Activated naive CD4-positive, alpha-beta T cell treated with anti-CD3 and anti-CD28 coated beads, Interleukin-2, amount 10 ng/mL, durations not matched to agents 7 days and 5 days (primary cell): ENCODE measurements at regions of chr4 and their contacts with region 1.

Region 1: GRCh38 chr4:108570993-108571569 is 49.3 kb upstream of the RPL34 start:
- DNase-seq: no peak
- H3K4me3 Mint-ChIP-seq: no peak overlapping the region
- H3K27ac Mint-ChIP-seq: no peak overlapping the region
- H3K4me1 Mint-ChIP-seq: peaks cover 23% of the 10 kb centered on the region
- H3K27me3 Mint-ChIP-seq: peaks cover 4% of the 10 kb centered on the region

Region 2: GRCh38 chr4:108018040-108018883 is 552.8 kb before region 1 on chr4:
- CTCF ChIA-PET with region 1: interaction called, 47 read pairs
- DNase-seq: peak; percentile 91
- H3K4me3 Mint-ChIP-seq: no peak overlapping the region
- H3K27ac Mint-ChIP-seq: peak overlapping the region; percentile 66
- H3K4me1 Mint-ChIP-seq: peaks cover 23% of the 10 kb centered on the region
- H3K27me3 Mint-ChIP-seq: no peaks in the 10 kb centered on the region

Region 3: GRCh38 chr4:108036213-108036612 is 534.9 kb before region 1 on chr4:
- CTCF ChIA-PET with region 1: interaction called, 55 read pairs
- DNase-seq: peak; percentile 88
- H3K4me3 Mint-ChIP-seq: peak overlapping the region; percentile 57
- H3K27ac Mint-ChIP-seq: peak overlapping the region; percentile 98
- H3K4me1 Mint-ChIP-seq: peaks cover 64% of the 10 kb centered on the region
- H3K27me3 Mint-ChIP-seq: no peaks in the 10 kb centered on the region

Region 4: DNA sequence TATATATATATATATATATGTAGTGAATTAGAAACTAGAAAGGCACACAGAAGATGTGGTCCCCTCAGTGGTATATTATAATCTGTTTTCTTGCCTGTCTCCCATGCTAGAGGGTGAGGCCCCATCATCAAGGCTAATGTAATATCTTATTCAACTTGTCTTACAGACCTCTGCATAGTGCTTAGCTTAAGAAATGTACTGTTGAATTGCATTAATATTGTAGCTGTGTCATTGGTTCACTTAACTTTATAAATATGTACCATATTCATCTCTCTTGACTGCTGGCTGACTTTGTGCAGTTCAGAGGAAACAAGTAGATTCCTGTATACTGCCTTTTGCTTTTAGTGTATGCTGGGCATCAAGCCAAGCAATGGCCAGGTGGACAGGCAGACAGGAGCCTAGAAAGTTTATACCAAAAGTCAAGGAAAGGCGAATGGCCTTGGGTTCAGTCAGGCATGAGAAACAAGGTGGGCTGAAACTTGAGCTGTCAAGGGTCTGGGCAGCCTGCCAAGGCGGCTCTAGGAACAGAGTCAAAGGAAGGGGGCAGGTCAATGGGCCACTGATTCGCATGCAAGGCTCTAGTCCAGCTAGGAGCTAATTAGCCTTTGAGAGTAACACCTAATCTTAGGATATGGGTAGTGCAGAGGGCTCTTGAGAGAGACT is 323.6 kb before region 1 on chr4:
- CTCF ChIA-PET with region 1: no interaction called
- DNase-seq: no peak
- H3K4me3 Mint-ChIP-seq: no peak overlapping the region
- H3K27ac Mint-ChIP-seq: no peak overlapping the region
- H3K4me1 Mint-ChIP-seq: peaks cover 5% of the 10 kb centered on the region
- H3K27me3 Mint-ChIP-seq: no peaks in the 10 kb centered on the region

Region 5: GRCh38 chr4:108360754-108361445 is 210.2 kb before region 1 on chr4:
- CTCF ChIA-PET with region 1: interaction called, 10 read pairs
- DNase-seq: no peak
- H3K4me3 Mint-ChIP-seq: no peak overlapping the region
- H3K27ac Mint-ChIP-seq: peak overlapping the region; percentile 88
- H3K4me1 Mint-ChIP-seq: peaks cover 70% of the 10 kb centered on the region
- H3K27me3 Mint-ChIP-seq: peaks cover 3% of the 10 kb centered on the region

Region 6: DNA sequence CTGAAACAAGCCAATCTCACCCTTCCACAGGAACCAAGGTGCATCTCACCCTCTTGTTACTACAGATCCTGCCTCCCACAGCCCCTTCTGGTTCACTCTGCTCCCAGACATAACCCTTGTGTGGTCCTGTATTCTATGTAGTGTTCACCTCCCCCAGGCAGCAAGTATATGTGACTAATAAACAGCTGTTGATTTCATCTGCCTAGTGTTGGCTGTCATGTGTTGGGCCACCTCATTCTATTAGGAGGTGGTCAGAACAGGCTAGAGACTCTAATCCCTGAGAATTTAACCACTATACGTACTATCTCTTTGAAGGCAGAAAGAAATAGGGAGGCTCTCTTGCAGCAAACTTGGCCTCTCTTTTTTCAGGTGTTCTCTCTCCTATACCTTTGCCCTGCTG is 85.0 kb before region 1 on chr4:
- CTCF ChIA-PET with region 1: interaction called, 14 read pairs
- DNase-seq: no peak
- H3K4me3 Mint-ChIP-seq: no peak overlapping the region
- H3K27ac Mint-ChIP-seq: no peak overlapping the region
- H3K4me1 Mint-ChIP-seq: peaks cover 46% of the 10 kb centered on the region
- H3K27me3 Mint-ChIP-seq: no peaks in the 10 kb centered on the region

Region 7: GRCh38 chr4:108527723-108528122 is 43.4 kb before region 1 on chr4:
- CTCF ChIA-PET with region 1: interaction called, 10 read pairs
- DNase-seq: peak; percentile 58
- H3K4me3 Mint-ChIP-seq: peak overlapping the region; percentile 6
- H3K27ac Mint-ChIP-seq: peak overlapping the region; percentile 68
- H3K4me1 Mint-ChIP-seq: peaks cover 72% of the 10 kb centered on the region
- H3K27me3 Mint-ChIP-seq: no peaks in the 10 kb centered on the region

Region 8: GRCh38 chr4:108560616-108561015 is 10.5 kb before region 1 on chr4:
- CTCF ChIA-PET with region 1: interaction called, 11 read pairs
- DNase-seq: no peak
- H3K4me3 Mint-ChIP-seq: no peak overlapping the region
- H3K27ac Mint-ChIP-seq: no peak overlapping the region
- H3K4me1 Mint-ChIP-seq: peaks cover 8% of the 10 kb centered on the region
- H3K27me3 Mint-ChIP-seq: peaks cover 4% of the 10 kb centered on the region